Vagina (tissue), 2 donors: ENCODE measurements at regions of chrX and their contacts with region 1.

Region 1: DNA sequence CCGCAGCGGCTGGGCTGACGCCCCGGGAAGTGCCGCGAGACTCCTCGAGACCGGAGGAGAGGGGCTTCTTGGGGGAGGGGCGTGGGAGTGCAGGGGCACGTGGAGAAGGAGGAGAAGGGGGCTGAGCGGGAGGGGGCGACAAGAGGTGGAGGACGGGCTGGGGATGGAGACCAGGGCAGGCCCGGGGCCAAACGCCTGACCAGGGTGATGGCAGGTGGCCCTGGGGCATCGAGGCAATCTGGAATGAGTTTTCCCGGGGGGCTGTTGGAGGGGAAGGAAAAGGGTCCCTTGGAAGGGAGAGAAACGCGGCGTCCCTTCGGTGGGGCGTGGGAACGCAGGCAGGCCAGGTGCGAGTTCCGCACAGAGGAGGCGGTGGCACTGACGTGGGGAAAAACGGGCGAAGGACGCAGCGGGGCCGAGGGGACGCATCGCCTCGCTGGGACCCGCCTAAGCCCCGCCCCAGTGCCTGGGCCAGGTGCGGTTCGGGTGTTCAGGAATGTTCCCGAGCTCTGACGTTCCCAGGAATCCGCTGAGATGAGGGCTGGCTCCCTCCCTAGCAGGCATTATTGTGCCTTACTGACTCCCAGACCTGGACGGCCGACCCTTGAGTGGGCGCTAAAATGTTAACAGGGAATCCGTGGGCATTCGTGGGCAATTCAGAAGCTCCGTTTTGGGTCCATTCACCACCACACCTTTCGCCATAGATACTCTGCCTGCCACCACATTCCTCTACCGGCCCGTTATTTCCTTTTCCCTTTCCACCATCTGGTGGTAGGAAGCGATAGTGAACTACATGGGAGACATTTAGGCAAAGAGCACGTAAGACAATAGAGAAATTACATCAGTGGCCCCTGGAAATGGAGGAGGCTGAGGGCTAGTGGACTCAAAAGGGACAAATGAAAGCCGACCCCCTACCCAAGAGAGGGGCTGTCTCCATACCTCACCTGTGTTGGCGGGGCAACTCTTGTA is 795 bp upstream of the SH3KBP1 start:
- DNase-seq: no peak
- H3K4me3 ChIP-seq: peak overlapping the region; percentile 45 to 54
- H3K27ac ChIP-seq: peak overlapping the region; percentile 86
- H3K4me1 ChIP-seq: no peaks in the 10 kb centered on the region
- H3K27me3 ChIP-seq: no peaks in the 10 kb centered on the region
- CTCF ChIP-seq: peak in 2 of 3 experiments; percentile 62 to 63
- POLR2A ChIP-seq: no peak

Region 2: DNA sequence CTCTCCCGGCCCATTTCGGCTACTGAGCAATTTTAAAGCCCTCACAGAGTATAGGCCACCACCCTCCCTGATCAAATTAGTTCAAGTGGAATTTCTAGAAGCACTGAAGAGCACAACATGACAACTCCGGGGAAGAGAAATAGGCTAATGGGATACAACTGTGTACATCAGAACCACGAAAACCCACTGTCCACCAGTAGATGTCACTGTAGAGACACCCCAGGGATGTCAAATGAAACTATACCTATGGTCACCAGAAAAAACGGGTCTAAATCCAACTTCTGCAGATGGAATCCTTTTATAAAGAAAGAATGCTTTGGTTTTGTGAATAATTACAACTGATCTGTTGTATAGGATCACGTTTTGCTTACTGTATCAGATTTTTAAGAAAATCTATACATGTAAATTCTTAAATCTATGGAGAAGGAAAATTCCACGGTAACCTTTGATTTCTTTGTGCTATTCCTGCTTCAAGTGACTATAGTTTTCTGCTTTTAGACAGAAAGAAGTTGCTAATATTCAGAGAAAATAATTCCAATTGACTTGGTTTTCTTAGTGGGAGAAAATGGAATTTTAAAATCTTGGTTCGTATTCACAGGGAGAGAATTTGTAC is 343.4 kb before region 1 on chrX:
- intact Hi-C with region 1: loop called (anchors 5 kb)
- DNase-seq: no peak
- H3K4me3 ChIP-seq: no peak overlapping the region
- H3K27ac ChIP-seq: no peak overlapping the region
- H3K4me1 ChIP-seq: no peaks in the 10 kb centered on the region
- H3K27me3 ChIP-seq: no peaks in the 10 kb centered on the region
- CTCF ChIP-seq: peak in 2 of 3 experiments; percentile 47 to 55
- POLR2A ChIP-seq: no peak

Region 3: GRCh38 chrX:19824603-19825002 is 63.6 kb before region 1 on chrX:
- intact Hi-C with region 1: no loop called
- DNase-seq: no peak
- H3K4me3 ChIP-seq: no peak overlapping the region
- H3K27ac ChIP-seq: no peak overlapping the region
- H3K4me1 ChIP-seq: no peaks in the 10 kb centered on the region
- H3K27me3 ChIP-seq: no peaks in the 10 kb centered on the region
- CTCF ChIP-seq: no peak
- POLR2A ChIP-seq: no peak